ENCODE measurements at regions of chr12 and their contacts with region 1.

Region 1: GRCh38 chr12:56593909-56594621 is 36.1 kb downstream of the BAZ2A start:
- DNase-seq: peak; percentile 78
- ATAC-seq: peak; percentile 85
- H3K4me3 Mint-ChIP-seq: no peak overlapping the region
- H3K27ac Mint-ChIP-seq: no peak overlapping the region
- H3K4me1 Mint-ChIP-seq: peaks cover 6% of the 10 kb centered on the region
- H3K27me3 Mint-ChIP-seq: no peaks in the 10 kb centered on the region
- CTCF ChIP-seq: peak; percentile 87

Region 2: GRCh38 chr12:56521590-56522371 is 72.3 kb before region 1 on chr12 and contains the start of gene RBMS2:
- CTCF ChIA-PET with region 1: interaction called, 95 read pairs
- POLR2A ChIA-PET with region 1: no interaction called
- intact Hi-C with region 1: no loop called
- DNase-seq: peak; percentile 62
- ATAC-seq: peak; percentile 91
- H3K4me3 Mint-ChIP-seq: peak within 1 kb of the TSS; percentile 66
- H3K27ac Mint-ChIP-seq: peak within 1 kb of the TSS; percentile 77
- H3K4me1 Mint-ChIP-seq: peaks cover 30% of the 10 kb centered on the region
- H3K27me3 Mint-ChIP-seq: no peaks in the 10 kb centered on the region
- CTCF ChIP-seq: no peak
- total RNA-seq, gene RBMS2: 2.8 to 3.1 TPM

Region 3: GRCh38 chr12:56565510-56566101 is 28.5 kb before region 1 on chr12:
- CTCF ChIA-PET with region 1: interaction called, 11 read pairs
- POLR2A ChIA-PET with region 1: no interaction called
- intact Hi-C with region 1: no loop called
- DNase-seq: peak; percentile 74
- ATAC-seq: peak; percentile 85
- H3K4me3 Mint-ChIP-seq: peak overlapping the region; percentile 37
- H3K27ac Mint-ChIP-seq: peak overlapping the region; percentile 40
- H3K4me1 Mint-ChIP-seq: peaks cover 25% of the 10 kb centered on the region
- H3K27me3 Mint-ChIP-seq: no peaks in the 10 kb centered on the region
- CTCF ChIP-seq: no peak

Region 4: GRCh38 chr12:56581418-56582145 is 12.5 kb before region 1 on chr12:
- CTCF ChIA-PET with region 1: interaction called, 16 read pairs
- POLR2A ChIA-PET with region 1: no interaction called
- intact Hi-C with region 1: no loop called
- DNase-seq: peak; percentile 73
- ATAC-seq: peak; percentile 97
- H3K4me3 Mint-ChIP-seq: no peak overlapping the region
- H3K27ac Mint-ChIP-seq: peak overlapping the region; percentile 96
- H3K4me1 Mint-ChIP-seq: peaks cover 24% of the 10 kb centered on the region
- H3K27me3 Mint-ChIP-seq: no peaks in the 10 kb centered on the region
- CTCF ChIP-seq: no peak

Region 5: DNA sequence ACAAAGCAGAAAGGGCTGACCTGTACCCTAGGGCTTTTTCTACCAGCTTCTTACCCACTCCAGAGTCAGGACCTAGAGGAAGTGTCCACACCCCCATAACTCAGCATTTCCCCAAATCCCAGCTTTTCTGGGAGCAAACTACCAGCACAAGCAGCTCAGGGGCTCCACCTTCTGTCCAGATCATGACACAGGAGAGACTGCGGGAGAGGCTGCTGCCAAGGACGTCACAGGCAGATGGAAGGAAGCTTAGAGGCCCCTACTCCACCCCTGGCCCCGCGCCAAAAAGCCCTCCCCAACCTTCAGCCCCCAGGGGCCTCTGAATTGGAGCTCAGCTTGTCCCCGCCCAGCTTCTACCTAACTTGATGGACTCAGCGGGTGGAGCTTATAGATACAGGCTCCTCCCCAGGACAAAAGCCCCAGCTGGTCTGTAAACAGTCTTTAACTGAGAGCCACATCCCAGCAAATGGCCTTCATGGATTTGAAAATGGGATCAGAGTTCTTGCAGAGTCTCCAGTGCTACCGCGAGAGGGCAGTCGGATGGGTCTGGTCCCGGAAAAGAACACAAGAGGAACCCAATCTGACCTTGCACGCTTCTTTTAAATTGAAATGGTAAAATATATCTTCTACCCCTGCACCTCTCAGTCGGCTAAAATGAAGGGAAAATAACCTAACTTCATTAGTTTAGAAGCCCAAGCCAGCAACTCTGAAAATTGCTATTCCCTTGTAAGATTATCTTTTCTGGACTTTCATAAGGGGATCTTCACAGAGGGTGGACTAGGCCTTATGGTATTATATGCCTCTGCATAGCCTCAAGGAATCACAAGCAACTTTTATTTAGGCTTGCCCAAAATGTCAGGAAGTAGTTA is 42.8 kb after region 1 on chr12:
- CTCF ChIA-PET with region 1: interaction called, 16 read pairs
- POLR2A ChIA-PET with region 1: no interaction called
- intact Hi-C with region 1: no loop called
- DNase-seq: peak; percentile 99
- ATAC-seq: peak; percentile 65
- H3K4me3 Mint-ChIP-seq: peak overlapping the region; percentile 91
- H3K27ac Mint-ChIP-seq: peak overlapping the region; percentile 98
- H3K4me1 Mint-ChIP-seq: peaks cover 58% of the 10 kb centered on the region
- H3K27me3 Mint-ChIP-seq: no peaks in the 10 kb centered on the region
- CTCF ChIP-seq: peak; percentile 66

Measured in activated CD8-positive, alpha-beta T cell treated with anti-CD3 and anti-CD28 coated beads for 36 hours (primary cell).